ENCODE measurements at regions of chr3 and their contacts with region 1.

Region 1: DNA sequence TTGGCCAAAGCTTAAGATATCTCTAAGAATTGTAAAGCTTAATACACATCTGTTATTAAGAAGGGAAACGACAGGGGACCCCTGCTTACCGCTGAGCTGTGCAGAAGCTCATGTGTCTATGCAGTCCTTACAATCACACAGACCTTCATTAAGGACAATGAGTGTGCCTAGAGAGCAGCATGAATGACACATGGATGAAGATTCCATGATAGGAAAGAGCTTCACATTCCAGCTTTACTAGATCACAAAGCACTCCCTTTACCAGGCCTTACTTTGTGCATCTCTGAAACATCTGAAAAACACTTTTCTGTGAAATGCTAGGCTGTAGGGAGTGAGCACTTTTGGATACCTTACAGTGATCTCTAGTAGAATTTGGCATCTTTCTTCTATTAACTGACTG is 32.0 kb downstream of the RNF168 start:
- DNase-seq: no peak
- ATAC-seq: no peak
- H3K4me3 ChIP-seq: no peak overlapping the region
- H3K27ac ChIP-seq: no peak overlapping the region
- H3K4me1 ChIP-seq: no peaks in the 10 kb centered on the region
- H3K27me3 ChIP-seq: no peaks in the 10 kb centered on the region
- CTCF ChIP-seq: no peak
- EP300 ChIP-seq: no peak
- POLR2A ChIP-seq: no peak
- RAD21 ChIP-seq: no peak

Region 2: GRCh38 chr3:196179380-196180308 is 291.9 kb before region 1 on chr3:
- CTCF ChIA-PET with region 1: no interaction called
- POLR2A ChIA-PET with region 1: no interaction called
- RAD21 ChIA-PET with region 1: no interaction called
- SMC1A ChIA-PET with region 1: no interaction called
- in situ Hi-C with region 1: no loop called
- intact Hi-C with region 1: no loop called
- DNase-seq: peak; percentile 98
- ATAC-seq: peak; percentile 81
- H3K4me3 ChIP-seq: peak overlapping the region; percentile 50; the same call in 1 of the 2 replicates
- H3K27ac ChIP-seq: peak overlapping the region; percentile 93
- H3K4me1 ChIP-seq: peaks cover 55% of the 10 kb centered on the region
- H3K27me3 ChIP-seq: no peaks in the 10 kb centered on the region
- CTCF ChIP-seq: peak; percentile 45 to 66 (median 48)
- EP300 ChIP-seq: peak; percentile 71 to 88
- POLR2A ChIP-seq: peak; percentile 75
- RAD21 ChIP-seq: peak; percentile 70

Region 3: DNA sequence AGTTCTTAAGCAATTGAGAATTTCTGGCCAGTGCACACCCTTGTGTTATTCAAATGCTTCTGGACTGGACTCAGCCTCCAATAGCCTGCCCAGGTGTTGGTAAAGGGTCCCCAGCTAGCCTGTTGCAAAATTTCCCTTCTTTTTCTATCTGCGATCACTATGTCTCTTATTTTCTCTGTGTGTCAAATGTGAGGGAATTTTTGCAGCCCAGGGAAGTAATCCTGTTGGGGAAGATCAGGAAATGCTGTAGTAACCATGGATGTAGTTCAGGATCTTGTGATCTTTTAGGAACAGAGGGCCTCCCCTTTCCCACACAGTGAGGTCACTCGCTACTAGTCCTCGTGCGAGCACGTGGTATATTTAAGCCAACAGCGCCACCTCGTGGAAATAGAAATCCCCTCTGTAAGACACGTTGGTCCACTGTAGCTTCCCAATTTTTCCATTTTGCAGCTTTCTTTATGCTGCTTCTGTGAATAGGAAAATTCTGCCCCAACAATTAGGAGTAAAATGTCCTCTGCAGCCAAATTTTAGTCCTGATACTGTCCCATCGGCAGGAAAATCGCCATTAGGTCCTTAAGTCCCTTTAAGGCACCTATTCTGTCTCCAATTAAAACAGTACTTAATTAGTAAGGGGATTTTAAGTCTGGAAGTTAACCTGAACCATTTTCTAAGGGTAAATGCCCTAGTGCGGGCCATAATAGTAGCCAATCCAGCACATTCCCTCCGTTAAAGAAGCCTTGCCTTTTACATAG is 47.6 kb after region 1 on chr3:
- CTCF ChIA-PET with region 1: interaction called, 10 read pairs
- POLR2A ChIA-PET with region 1: no interaction called
- RAD21 ChIA-PET with region 1: interaction called, 3 read pairs
- SMC1A ChIA-PET with region 1: interaction called, 3 read pairs
- in situ Hi-C with region 1: no loop called
- intact Hi-C with region 1: no loop called
- DNase-seq: no peak
- ATAC-seq: peak; percentile 90
- H3K4me3 ChIP-seq: no peak overlapping the region
- H3K27ac ChIP-seq: no peak overlapping the region
- H3K4me1 ChIP-seq: no peaks in the 10 kb centered on the region
- H3K27me3 ChIP-seq: no peaks in the 10 kb centered on the region
- CTCF ChIP-seq: peak; percentile 47 to 50 (median 49)
- EP300 ChIP-seq: no peak
- POLR2A ChIP-seq: no peak
- RAD21 ChIP-seq: peak; percentile 74

Region 4: GRCh38 chr3:197038679-197039462 is 567.3 kb after region 1 on chr3:
- CTCF ChIA-PET with region 1: no interaction called
- POLR2A ChIA-PET with region 1: no interaction called
- RAD21 ChIA-PET with region 1: no interaction called
- SMC1A ChIA-PET with region 1: no interaction called
- in situ Hi-C with region 1: no loop called
- intact Hi-C with region 1: no loop called
- DNase-seq: no peak
- ATAC-seq: no peak
- H3K4me3 ChIP-seq: no peak overlapping the region
- H3K27ac ChIP-seq: no peak overlapping the region
- H3K4me1 ChIP-seq: no peaks in the 10 kb centered on the region
- H3K27me3 ChIP-seq: no peaks in the 10 kb centered on the region
- CTCF ChIP-seq: no peak
- EP300 ChIP-seq: no peak
- POLR2A ChIP-seq: no peak
- RAD21 ChIP-seq: no peak

Measured in GM12878 (cell line).